CD8-positive, alpha-beta memory T cell (primary cell): ENCODE measurements at regions of chr6 and their contacts with region 1.

Region 1: GRCh38 chr6:32838114-32838958 is at the start of gene TAP2:
- DNase-seq: peak; percentile 94 to 98 (median 97)
- H3K4me3 ChIP-seq: peak within 1 kb of the TSS; percentile 75
- H3K4me3 Mint-ChIP-seq: peak within 1 kb of the TSS; percentile 91 to 97 (median 96)
- H3K27ac ChIP-seq: peak within 1 kb of the TSS; percentile 77
- H3K27ac Mint-ChIP-seq: peak within 1 kb of the TSS; percentile 91 to 100 (median 100)
- H3K4me1 ChIP-seq: peaks cover 78% of the 10 kb centered on the region
- H3K4me1 Mint-ChIP-seq: peaks cover 84 to 91% (median 88%) of the 10 kb centered on the region in 3 donors
- H3K27me3 ChIP-seq: no peaks in the 10 kb centered on the region
- H3K27me3 Mint-ChIP-seq: peaks cover 0 to 2% of the 10 kb centered on the region in 2 donors
- total RNA-seq, gene TAP2: 221 to 228 TPM

Region 2: DNA sequence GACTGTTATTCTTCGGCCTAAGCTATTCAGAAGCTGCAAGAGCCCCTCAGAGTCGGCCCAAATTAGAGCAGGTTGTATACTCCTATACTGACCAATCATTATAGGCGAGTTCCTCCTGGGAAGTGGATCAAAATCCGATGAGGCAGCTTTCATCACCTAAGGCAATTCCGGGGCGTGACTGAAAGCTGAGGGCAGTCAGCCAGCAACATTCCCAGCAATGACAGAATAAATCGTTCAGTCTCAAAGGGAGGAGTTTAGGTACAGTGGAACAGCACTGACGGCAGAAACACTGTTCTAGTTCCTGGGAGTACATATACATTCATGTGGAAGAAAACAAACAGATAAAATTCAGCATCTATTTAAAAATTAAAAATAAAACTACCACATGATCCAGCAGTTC is 85.8 kb before region 1 on chr6:
- CTCF ChIA-PET with region 1: no interaction called
- POLR2A ChIA-PET with region 1: no interaction called
- DNase-seq: no peak
- H3K4me3 ChIP-seq: no peak overlapping the region
- H3K4me3 Mint-ChIP-seq: no peak overlapping the region
- H3K27ac ChIP-seq: no peak overlapping the region
- H3K27ac Mint-ChIP-seq: no peak overlapping the region
- H3K4me1 ChIP-seq: no peaks in the 10 kb centered on the region
- H3K4me1 Mint-ChIP-seq: no peaks in the 10 kb centered on the region
- H3K27me3 ChIP-seq: no peaks in the 10 kb centered on the region
- H3K27me3 Mint-ChIP-seq: peaks cover 12 to 56% of the 10 kb centered on the region in 2 donors

Region 3: GRCh38 chr6:32853541-32854375 is 15.4 kb after region 1 on chr6 and contains the starts of genes PSMB9 and TAP1:
- CTCF ChIA-PET with region 1: interaction called, 295 read pairs
- POLR2A ChIA-PET with region 1: interaction called, 350 read pairs
- DNase-seq: peak; percentile 93 to 97 (median 94)
- H3K4me3 ChIP-seq: peak within 1 kb of the TSS; percentile 90
- H3K4me3 Mint-ChIP-seq: peak within 1 kb of the TSS; percentile 95 to 100 (median 99)
- H3K27ac ChIP-seq: peak within 1 kb of the TSS; percentile 97
- H3K27ac Mint-ChIP-seq: peak within 1 kb of the TSS; percentile 99 to 100 (median 100)
- H3K4me1 ChIP-seq: peaks cover 68% of the 10 kb centered on the region
- H3K4me1 Mint-ChIP-seq: peaks cover 71 to 79% (median 77%) of the 10 kb centered on the region in 3 donors
- H3K27me3 ChIP-seq: no peaks in the 10 kb centered on the region
- H3K27me3 Mint-ChIP-seq: no peaks in the 10 kb centered on the region
- total RNA-seq, gene PSMB9: 245 to 255 TPM
- total RNA-seq, gene TAP1: 394 to 407 TPM

Region 4: GRCh38 chr6:32862725-32863124 is 24.4 kb after region 1 on chr6:
- CTCF ChIA-PET with region 1: interaction called, 295 read pairs
- POLR2A ChIA-PET with region 1: interaction called, 350 read pairs
- DNase-seq: no peak
- H3K4me3 ChIP-seq: no peak overlapping the region
- H3K4me3 Mint-ChIP-seq: no peak overlapping the region
- H3K27ac ChIP-seq: no peak overlapping the region
- H3K27ac Mint-ChIP-seq: peak overlapping the region in 3 of 8 donors; percentile 20 to 81 (median 37)
- H3K4me1 ChIP-seq: peaks cover 25% of the 10 kb centered on the region
- H3K4me1 Mint-ChIP-seq: peaks cover 44 to 59% (median 50%) of the 10 kb centered on the region in 3 donors
- H3K27me3 ChIP-seq: no peaks in the 10 kb centered on the region
- H3K27me3 Mint-ChIP-seq: no peaks in the 10 kb centered on the region

Region 5: GRCh38 chr6:32879691-32880090 is 41.4 kb after region 1 on chr6:
- CTCF ChIA-PET with region 1: interaction called, 10 read pairs
- POLR2A ChIA-PET with region 1: interaction called, 3 read pairs
- DNase-seq: no peak
- H3K4me3 ChIP-seq: no peak overlapping the region
- H3K4me3 Mint-ChIP-seq: no peak overlapping the region
- H3K27ac ChIP-seq: no peak overlapping the region
- H3K27ac Mint-ChIP-seq: peak overlapping the region in 1 of 8 donors; percentile 74
- H3K4me1 ChIP-seq: no peaks in the 10 kb centered on the region
- H3K4me1 Mint-ChIP-seq: no peaks in the 10 kb centered on the region
- H3K27me3 ChIP-seq: no peaks in the 10 kb centered on the region
- H3K27me3 Mint-ChIP-seq: peaks cover 0 to 8% of the 10 kb centered on the region in 2 donors

Region 6: DNA sequence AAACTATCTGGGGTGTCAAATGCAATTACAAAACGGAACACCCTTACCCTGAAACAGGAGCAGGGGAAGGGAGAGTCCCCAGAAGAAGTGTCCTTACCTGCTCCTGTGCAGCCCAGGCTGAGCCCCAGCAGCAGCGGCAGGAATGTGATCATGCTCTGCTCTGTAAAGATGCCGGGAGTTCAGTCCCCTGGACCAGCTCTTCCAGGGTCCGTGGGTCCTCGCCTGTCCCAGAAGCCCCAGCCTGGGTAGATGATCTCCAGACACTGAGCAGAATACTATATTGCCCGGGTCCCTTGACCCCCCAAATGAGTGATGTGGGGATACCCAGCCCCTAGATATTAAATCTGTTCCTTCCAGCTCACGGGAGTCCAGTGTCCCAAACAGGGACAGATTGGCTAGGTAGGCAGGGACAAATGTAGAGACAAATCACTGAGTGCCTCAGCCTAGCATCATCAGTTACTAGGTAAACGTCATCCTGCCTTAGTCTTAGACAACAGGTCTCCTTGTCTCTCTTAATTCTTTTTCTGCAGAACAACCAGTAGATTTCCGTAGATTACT is 102.4 kb after region 1 on chr6 and contains the start of gene HLA-DMB:
- CTCF ChIA-PET with region 1: interaction called, 14 read pairs
- POLR2A ChIA-PET with region 1: interaction called, 3 read pairs
- DNase-seq: peak; percentile 6 to 75 (median 68)
- H3K4me3 ChIP-seq: peak within 1 kb of the TSS; percentile 73
- H3K4me3 Mint-ChIP-seq: peak within 1 kb of the TSS; percentile 88 to 97 (median 95)
- H3K27ac ChIP-seq: peak within 1 kb of the TSS; percentile 73
- H3K27ac Mint-ChIP-seq: peak within 1 kb of the TSS; percentile 94 to 99 (median 98)
- H3K4me1 ChIP-seq: peaks cover 58% of the 10 kb centered on the region
- H3K4me1 Mint-ChIP-seq: peaks cover 56 to 70% (median 64%) of the 10 kb centered on the region in 3 donors
- H3K27me3 ChIP-seq: no peaks in the 10 kb centered on the region
- H3K27me3 Mint-ChIP-seq: peaks cover 0 to 1% of the 10 kb centered on the region in 2 donors
- total RNA-seq, gene HLA-DMB: 4.3 to 5.3 TPM

Region 7: GRCh38 chr6:33061987-33062386 is 223.7 kb after region 1 on chr6:
- CTCF ChIA-PET with region 1: no interaction called
- POLR2A ChIA-PET with region 1: no interaction called
- DNase-seq: no peak
- H3K4me3 ChIP-seq: no peak overlapping the region
- H3K4me3 Mint-ChIP-seq: no peak overlapping the region
- H3K27ac ChIP-seq: no peak overlapping the region
- H3K27ac Mint-ChIP-seq: no peak overlapping the region
- H3K4me1 ChIP-seq: no peaks in the 10 kb centered on the region
- H3K4me1 Mint-ChIP-seq: peaks cover 0 to 8% (median 4%) of the 10 kb centered on the region in 3 donors
- H3K27me3 ChIP-seq: no peaks in the 10 kb centered on the region
- H3K27me3 Mint-ChIP-seq: peaks cover 2 to 7% of the 10 kb centered on the region in 2 donors